Endothelial cell of umbilical vein (primary cell): ENCODE measurements at regions of chr11 and their contacts with region 1.

Region 1: DNA sequence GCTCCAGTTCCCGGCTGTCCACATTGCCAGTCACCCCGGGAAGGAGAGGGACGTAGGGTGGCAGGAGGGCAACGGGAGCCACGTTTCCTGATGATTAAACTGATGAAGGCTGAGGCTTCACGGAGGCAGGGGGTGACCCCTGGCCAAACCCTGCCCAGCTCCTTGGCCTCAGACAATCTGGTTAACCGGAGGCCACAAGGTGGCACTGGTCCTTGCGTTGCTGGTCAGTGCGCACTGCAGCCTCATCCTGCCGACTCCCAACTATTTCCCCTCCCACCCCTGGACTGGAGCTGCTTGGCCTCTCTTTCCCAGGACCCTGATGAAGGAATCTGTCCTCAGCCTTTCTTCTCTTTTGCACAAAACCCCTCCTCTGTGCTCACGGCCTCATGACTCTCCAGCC is 75.3 kb downstream of the PDE2A start:
- DNase-seq: peak; percentile 44
- H3K4me3 ChIP-seq: no peak overlapping the region
- H3K27ac ChIP-seq: no peak overlapping the region
- H3K4me1 ChIP-seq: no peaks in the 10 kb centered on the region
- H3K27me3 ChIP-seq: no peaks in the 10 kb centered on the region
- CTCF ChIP-seq: peak; percentile 59 to 85
- POLR2A ChIP-seq: no peak

Region 2: GRCh38 chr11:72585762-72586311 is 13.1 kb before region 1 on chr11:
- CTCF ChIA-PET with region 1: interaction called, 78 read pairs
- POLR2A ChIA-PET with region 1: no interaction called
- dilution Hi-C with region 1: no loop called
- intact Hi-C with region 1: loop called (anchors 1 kb)
- DNase-seq: peak; percentile 69
- H3K4me3 ChIP-seq: no peak overlapping the region
- H3K27ac ChIP-seq: no peak overlapping the region
- H3K4me1 ChIP-seq: no peaks in the 10 kb centered on the region
- H3K27me3 ChIP-seq: peaks cover 2 to 6% of the 10 kb centered on the region in 2 experiments
- CTCF ChIP-seq: peak; percentile 83 to 86
- POLR2A ChIP-seq: no peak

Region 3: GRCh38 chr11:72625691-72626413 is 26.9 kb after region 1 on chr11:
- CTCF ChIA-PET with region 1: interaction called, 18 read pairs
- POLR2A ChIA-PET with region 1: no interaction called
- dilution Hi-C with region 1: no loop called
- intact Hi-C with region 1: no loop called
- DNase-seq: peak; percentile 85
- H3K4me3 ChIP-seq: no peak overlapping the region
- H3K27ac ChIP-seq: peak overlapping the region; percentile 80
- H3K4me1 ChIP-seq: peaks cover 19% of the 10 kb centered on the region
- H3K27me3 ChIP-seq: no peaks in the 10 kb centered on the region
- CTCF ChIP-seq: no peak
- POLR2A ChIP-seq: no peak

Region 4: GRCh38 chr11:72642884-72643511 is 44.1 kb after region 1 on chr11:
- CTCF ChIA-PET with region 1: interaction called, 166 read pairs
- POLR2A ChIA-PET with region 1: no interaction called
- dilution Hi-C with region 1: no loop called
- intact Hi-C with region 1: loop called (anchors 1 kb)
- DNase-seq: peak; percentile 78
- H3K4me3 ChIP-seq: peak overlapping the region in 1 of 3 experiments; percentile 43
- H3K27ac ChIP-seq: no peak overlapping the region
- H3K4me1 ChIP-seq: peaks cover 9% of the 10 kb centered on the region
- H3K27me3 ChIP-seq: peaks cover 0 to 2% of the 10 kb centered on the region in 2 experiments
- CTCF ChIP-seq: peak; percentile 93 to 97
- POLR2A ChIP-seq: no peak

Region 5: DNA sequence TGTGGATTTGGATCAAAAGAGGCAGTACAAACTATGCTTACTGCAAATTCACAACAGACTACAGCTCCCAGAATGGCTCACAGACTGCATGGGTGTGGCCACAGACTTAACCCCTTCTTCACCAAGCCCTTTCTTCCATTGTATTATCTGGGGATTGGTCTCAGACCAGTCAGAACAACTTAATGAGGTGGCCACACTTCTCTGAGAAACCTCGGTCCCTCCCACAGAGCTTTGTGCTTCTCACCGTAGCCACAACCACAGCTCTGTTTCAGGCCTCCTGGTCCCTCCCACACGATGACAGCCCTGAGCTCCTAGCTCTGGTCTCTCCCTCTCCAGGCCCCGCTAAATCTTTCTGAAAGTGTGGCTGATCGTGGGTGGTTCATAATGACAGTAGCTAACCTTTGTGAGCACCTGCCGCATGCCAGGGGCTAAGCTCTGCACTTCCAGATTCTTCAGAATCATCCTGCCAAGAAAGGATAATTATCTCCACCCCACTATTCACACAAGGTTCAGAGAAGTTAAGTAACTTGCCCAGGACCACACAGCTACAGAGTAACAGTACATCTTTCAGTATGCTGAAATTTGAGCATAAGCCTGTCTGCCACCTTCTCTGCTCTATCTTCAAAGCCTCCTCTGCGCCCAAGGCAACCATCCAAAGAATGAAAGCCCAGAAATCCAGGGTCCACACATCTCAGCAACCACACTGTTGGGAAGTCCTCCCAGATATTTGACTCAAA is 69.9 kb after region 1 on chr11:
- CTCF ChIA-PET with region 1: interaction called, 10 read pairs
- POLR2A ChIA-PET with region 1: no interaction called
- dilution Hi-C with region 1: no loop called
- intact Hi-C with region 1: no loop called
- DNase-seq: no peak
- H3K4me3 ChIP-seq: no peak overlapping the region
- H3K27ac ChIP-seq: no peak overlapping the region
- H3K4me1 ChIP-seq: no peaks in the 10 kb centered on the region
- H3K27me3 ChIP-seq: peaks cover 9 to 15% of the 10 kb centered on the region in 2 experiments
- CTCF ChIP-seq: no peak
- POLR2A ChIP-seq: no peak